GM12878 (cell line): ENCODE measurements at regions of chr19 and their contacts with region 1.

Region 1: DNA sequence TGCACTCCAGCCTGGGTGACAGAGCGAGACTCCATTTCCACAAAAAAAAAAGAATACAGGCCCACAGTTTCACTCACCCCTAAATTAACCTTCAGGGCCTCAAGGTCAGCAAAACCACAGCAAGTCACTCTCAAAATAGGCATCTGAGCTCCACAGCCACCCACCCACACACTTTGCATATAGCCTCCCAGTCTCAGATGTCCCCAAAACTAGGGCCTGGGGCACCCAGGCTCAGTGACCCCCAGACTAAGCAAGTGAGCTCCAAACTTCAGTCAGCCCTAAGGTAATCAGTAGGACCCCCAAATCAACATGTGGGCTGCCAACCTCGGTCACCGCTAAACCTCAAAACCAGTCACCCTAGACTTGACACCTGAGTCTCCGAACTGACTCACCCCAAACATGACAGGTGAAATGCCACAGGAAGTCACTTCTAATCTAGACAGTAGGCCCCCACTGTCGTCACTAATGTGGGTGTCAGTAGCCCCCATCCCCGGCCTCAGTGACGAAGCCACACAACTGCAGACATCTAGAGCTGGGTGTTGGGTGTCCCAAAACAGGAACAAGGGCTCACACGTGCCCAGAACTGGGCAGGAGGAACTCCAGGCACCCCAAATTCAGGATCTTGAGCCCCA is 13.9 kb downstream of the RABAC1 start:
- DNase-seq: peak; percentile 94
- ATAC-seq: peak; percentile 86
- H3K4me3 ChIP-seq: no peak overlapping the region; the same call in 1 of the 2 replicates
- H3K27ac ChIP-seq: peak overlapping the region; percentile 85
- H3K4me1 ChIP-seq: peaks cover 47% of the 10 kb centered on the region
- H3K27me3 ChIP-seq: no peaks in the 10 kb centered on the region
- CTCF ChIP-seq: no peak
- EP300 ChIP-seq: peak; percentile 96 to 98
- POLR2A ChIP-seq: peak; percentile 54
- RAD21 ChIP-seq: peak; percentile 6; the same call in 1 of the 2 replicates

Region 2: DNA sequence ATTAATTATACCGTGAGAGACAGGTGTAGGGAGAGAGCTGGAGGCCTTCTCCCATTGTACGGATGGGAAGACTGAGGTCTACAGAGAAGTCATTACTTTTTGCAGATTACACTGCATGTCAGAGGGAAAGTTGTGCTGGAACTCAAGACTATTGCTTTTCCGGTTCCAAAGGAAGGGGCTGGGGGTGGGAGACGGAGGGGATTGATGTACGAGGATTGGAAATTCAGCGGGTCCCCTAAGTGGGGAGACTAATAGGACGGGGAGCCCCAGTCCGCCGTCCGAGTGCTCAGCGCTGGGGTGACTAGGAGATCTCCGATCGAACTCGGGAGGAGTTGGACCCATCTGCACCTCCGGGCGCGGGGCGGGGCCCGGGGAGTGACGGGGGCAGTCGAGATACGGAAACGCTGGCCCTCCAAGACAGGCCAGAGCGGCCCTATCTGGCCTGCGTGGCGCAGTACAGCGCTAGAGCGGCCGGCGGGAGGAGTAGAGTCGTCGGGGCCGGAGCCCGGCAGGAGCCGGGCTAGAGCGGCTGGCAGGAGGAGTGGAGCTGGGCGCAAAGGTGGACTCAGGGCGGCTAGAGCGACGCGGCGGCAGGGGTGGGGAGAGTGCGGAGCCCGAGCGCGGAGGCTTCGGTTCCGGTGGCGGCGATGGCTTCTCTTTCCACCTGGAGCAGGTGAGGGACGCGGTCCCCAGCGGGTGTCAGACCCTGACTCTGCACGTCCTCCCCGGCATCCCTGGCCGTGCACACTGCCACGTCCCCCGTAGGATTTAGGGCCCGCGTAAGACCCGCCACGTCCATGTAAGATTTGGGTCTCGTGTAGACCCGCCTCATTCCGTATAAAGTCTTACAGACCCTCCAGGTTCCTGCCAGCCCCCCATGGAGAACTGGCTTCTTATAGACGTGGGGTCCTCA is 61.2 kb before region 1 on chr19:
- CTCF ChIA-PET with region 1: interaction called, 15 read pairs
- POLR2A ChIA-PET with region 1: interaction called, 17 read pairs
- RAD21 ChIA-PET with region 1: interaction called, 28 read pairs
- SMC1A ChIA-PET with region 1: interaction called, 11 read pairs
- in situ Hi-C with region 1: no loop called
- intact Hi-C with region 1: loop called (anchors 2 kb)
- DNase-seq: peak; percentile 86
- ATAC-seq: peak; percentile 87
- H3K4me3 ChIP-seq: peak overlapping the region; percentile 89
- H3K27ac ChIP-seq: peak overlapping the region; percentile 87
- H3K4me1 ChIP-seq: peaks cover 30% of the 10 kb centered on the region
- H3K27me3 ChIP-seq: no peaks in the 10 kb centered on the region
- CTCF ChIP-seq: 0 out of 6 replicates have a peak, but pooled peaks of 1 of the 3 experiments have one; percentile 7
- EP300 ChIP-seq: no peak; a peak in 1 of 4 replicates
- POLR2A ChIP-seq: peak; percentile 92
- RAD21 ChIP-seq: no peak

Region 3: DNA sequence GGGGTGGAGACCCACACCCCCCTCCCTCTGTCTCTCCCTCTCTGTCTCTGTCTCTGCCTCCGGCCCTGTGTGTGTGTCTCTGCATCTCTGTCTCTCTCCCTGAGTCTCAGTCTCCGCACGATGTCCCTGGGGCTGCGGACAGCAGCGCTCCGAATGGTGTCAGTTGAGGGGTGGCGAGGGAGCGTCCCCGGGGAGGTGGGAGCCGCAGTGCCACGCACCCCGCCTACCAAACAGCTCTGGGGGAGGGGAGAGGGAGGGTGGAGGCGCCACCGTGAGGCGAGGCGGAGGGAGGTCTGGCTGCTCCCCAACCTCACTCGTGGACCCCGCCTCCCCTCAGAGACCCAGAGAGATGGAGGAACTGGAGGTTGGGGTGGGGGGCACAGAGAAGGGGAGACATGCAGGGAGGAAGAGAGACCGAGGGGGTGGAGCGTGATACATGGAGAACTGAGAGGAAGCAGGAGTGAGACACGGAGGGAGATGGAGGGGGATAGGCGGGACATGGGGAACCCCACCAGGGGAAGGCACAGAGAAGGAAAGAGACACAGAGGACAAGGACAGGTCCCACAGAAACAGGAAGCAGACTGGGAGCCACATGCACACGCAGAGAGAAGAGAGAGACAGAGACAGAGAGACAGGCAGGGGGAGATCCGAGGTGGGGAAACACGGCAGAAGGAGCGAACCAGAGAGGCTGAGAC is 24.2 kb before region 1 on chr19:
- CTCF ChIA-PET with region 1: no interaction called
- POLR2A ChIA-PET with region 1: no interaction called
- RAD21 ChIA-PET with region 1: no interaction called
- SMC1A ChIA-PET with region 1: no interaction called
- in situ Hi-C with region 1: no loop called
- intact Hi-C with region 1: no loop called
- DNase-seq: no peak
- ATAC-seq: peak; percentile 24
- H3K4me3 ChIP-seq: no peak overlapping the region
- H3K27ac ChIP-seq: no peak overlapping the region
- H3K4me1 ChIP-seq: peaks cover 2% of the 10 kb centered on the region; the same call in 1 of the 2 replicates
- H3K27me3 ChIP-seq: peaks cover 0 to 5% of the 10 kb centered on the region in 2 experiments; a peak in 2 of 4 replicates
- CTCF ChIP-seq: 0 out of 6 replicates have a peak, but pooled peaks of 1 of the 3 experiments have one; percentile 3
- EP300 ChIP-seq: no peak
- POLR2A ChIP-seq: no peak
- RAD21 ChIP-seq: no peak

Region 4: GRCh38 chr19:41959056-41960053 is 14.1 kb after region 1 on chr19 and contains the start of gene RABAC1:
- CTCF ChIA-PET with region 1: interaction called, 34 read pairs
- POLR2A ChIA-PET with region 1: interaction called, 16 read pairs
- RAD21 ChIA-PET with region 1: interaction called, 9 read pairs
- SMC1A ChIA-PET with region 1: interaction called, 4 read pairs
- in situ Hi-C with region 1: no loop called
- intact Hi-C with region 1: no loop called
- DNase-seq: peak; percentile 36
- ATAC-seq: peak; percentile 94
- H3K4me3 ChIP-seq: peak within 1 kb of the TSS; percentile 89
- H3K27ac ChIP-seq: peak within 1 kb of the TSS; percentile 72
- H3K4me1 ChIP-seq: peaks cover 12% of the 10 kb centered on the region
- H3K27me3 ChIP-seq: no peaks in the 10 kb centered on the region
- CTCF ChIP-seq: peak; percentile 29 to 57 (median 49); a peak in 5 of 6 replicates
- EP300 ChIP-seq: no peak
- POLR2A ChIP-seq: peak; percentile 60; the same call in 1 of the 2 replicates
- RAD21 ChIP-seq: peak; percentile 14; the same call in 1 of the 2 replicates
- polyA plus RNA-seq, gene RABAC1: 10.9 to 27.3 TPM